MCF 10A (cell line): ENCODE measurements at regions of chr1 and their contacts with region 1.

Region 1: GRCh38 chr1:17274186-17275170 is 25.6 kb downstream of the PADI3 start:
- DNase-seq: peak; percentile 61
- H3K4me3 Mint-ChIP-seq: no peak overlapping the region
- H3K27ac Mint-ChIP-seq: no peak overlapping the region
- H3K4me1 Mint-ChIP-seq: peaks cover 4% of the 10 kb centered on the region
- H3K27me3 Mint-ChIP-seq: no peaks in the 10 kb centered on the region
- CTCF ChIP-seq: peak; percentile 82

Region 2: GRCh38 chr1:17287130-17287776 is 12.8 kb after region 1 on chr1:
- CTCF ChIA-PET with region 1: interaction called, 6 read pairs
- POLR2A ChIA-PET with region 1: interaction called, 13 read pairs
- intact Hi-C with region 1: no loop called
- DNase-seq: peak; percentile 96
- H3K4me3 Mint-ChIP-seq: no peak overlapping the region
- H3K27ac Mint-ChIP-seq: no peak overlapping the region
- H3K4me1 Mint-ChIP-seq: peaks cover 15% of the 10 kb centered on the region
- H3K27me3 Mint-ChIP-seq: no peaks in the 10 kb centered on the region
- CTCF ChIP-seq: no peak

Region 3: DNA sequence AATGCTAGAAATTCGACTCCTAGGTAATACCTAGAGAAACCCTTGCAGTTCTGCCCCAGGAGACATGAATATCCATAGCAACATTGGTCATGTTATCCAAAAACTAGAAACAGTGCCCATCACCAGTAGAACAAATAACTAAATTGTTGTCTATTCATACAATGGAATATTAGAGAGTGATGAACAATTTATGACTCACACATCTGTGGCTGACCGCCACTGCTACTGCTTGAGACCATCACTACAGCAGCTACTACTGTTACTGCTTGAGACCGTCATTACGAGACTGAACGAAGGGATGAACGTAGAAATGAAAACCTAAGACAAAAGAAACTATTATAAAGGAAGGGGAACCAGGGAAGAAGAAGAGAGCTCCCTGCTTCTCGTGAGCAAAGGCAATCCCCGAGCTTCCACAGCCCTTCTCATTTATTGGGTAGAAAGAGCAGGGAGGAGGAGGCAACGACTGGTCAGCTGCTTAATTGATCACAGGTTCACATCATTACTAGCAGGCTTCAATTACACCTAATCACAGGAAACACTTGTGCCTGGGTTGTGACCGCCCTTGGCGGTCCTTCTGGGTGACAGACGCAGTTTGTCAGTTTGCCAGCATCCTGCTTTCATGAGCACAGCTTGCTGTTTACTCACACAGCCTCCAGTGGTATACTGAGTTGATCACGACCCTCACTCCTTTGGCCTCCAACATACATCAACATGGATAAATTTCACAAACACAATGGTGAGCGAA is 19.4 kb after region 1 on chr1:
- CTCF ChIA-PET with region 1: interaction called, 5 read pairs
- POLR2A ChIA-PET with region 1: interaction called, 13 read pairs
- intact Hi-C with region 1: no loop called
- DNase-seq: no peak
- H3K4me3 Mint-ChIP-seq: no peak overlapping the region
- H3K27ac Mint-ChIP-seq: no peak overlapping the region
- H3K4me1 Mint-ChIP-seq: peaks cover 37% of the 10 kb centered on the region
- H3K27me3 Mint-ChIP-seq: no peaks in the 10 kb centered on the region
- CTCF ChIP-seq: no peak

Region 4: DNA sequence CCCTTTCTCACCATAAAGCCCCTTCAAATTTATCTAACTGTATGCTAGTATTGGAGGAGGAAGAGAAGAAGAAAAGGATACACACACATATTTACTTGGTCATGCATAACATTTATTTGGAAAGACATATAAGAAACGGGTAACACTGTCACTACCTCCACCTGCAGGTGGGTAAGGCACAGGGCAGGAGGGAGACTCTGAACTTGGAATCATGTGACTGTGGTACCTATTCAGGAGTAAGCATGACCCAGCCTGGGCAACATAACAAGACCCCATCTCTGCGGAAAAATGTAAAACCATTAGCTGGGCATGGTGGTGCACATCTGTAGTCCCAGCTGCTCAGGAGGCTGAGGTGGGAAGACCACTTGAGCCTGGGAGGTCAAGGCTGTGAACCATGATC is 96.1 kb after region 1 on chr1:
- CTCF ChIA-PET with region 1: interaction called, 4 read pairs
- POLR2A ChIA-PET with region 1: no interaction called
- intact Hi-C with region 1: loop called (anchors 1 kb)
- DNase-seq: peak; percentile 56
- H3K4me3 Mint-ChIP-seq: no peak overlapping the region
- H3K27ac Mint-ChIP-seq: no peak overlapping the region
- H3K4me1 Mint-ChIP-seq: peaks cover 16% of the 10 kb centered on the region
- H3K27me3 Mint-ChIP-seq: no peaks in the 10 kb centered on the region
- CTCF ChIP-seq: peak; percentile 49

Region 5: GRCh38 chr1:17405898-17406759 is 131.7 kb after region 1 on chr1:
- CTCF ChIA-PET with region 1: interaction called, 4 read pairs
- POLR2A ChIA-PET with region 1: no interaction called
- intact Hi-C with region 1: loop called (anchors 10 kb)
- DNase-seq: peak; percentile 61
- H3K4me3 Mint-ChIP-seq: no peak overlapping the region
- H3K27ac Mint-ChIP-seq: no peak overlapping the region
- H3K4me1 Mint-ChIP-seq: peaks cover 10% of the 10 kb centered on the region
- H3K27me3 Mint-ChIP-seq: no peaks in the 10 kb centered on the region
- CTCF ChIP-seq: peak; percentile 82